Endothelial cell of umbilical vein (primary cell): ENCODE measurements at regions of chr20 and their contacts with region 1.

Region 1: GRCh38 chr20:2451939-2452732 is 18.5 kb downstream of the SNRPB start:
- DNase-seq: peak; percentile 62
- H3K4me3 ChIP-seq: no peak overlapping the region
- H3K27ac ChIP-seq: no peak overlapping the region
- H3K4me1 ChIP-seq: no peaks in the 10 kb centered on the region
- H3K27me3 ChIP-seq: no peaks in the 10 kb centered on the region
- CTCF ChIP-seq: peak; percentile 84 to 90
- POLR2A ChIP-seq: no peak

Region 2: DNA sequence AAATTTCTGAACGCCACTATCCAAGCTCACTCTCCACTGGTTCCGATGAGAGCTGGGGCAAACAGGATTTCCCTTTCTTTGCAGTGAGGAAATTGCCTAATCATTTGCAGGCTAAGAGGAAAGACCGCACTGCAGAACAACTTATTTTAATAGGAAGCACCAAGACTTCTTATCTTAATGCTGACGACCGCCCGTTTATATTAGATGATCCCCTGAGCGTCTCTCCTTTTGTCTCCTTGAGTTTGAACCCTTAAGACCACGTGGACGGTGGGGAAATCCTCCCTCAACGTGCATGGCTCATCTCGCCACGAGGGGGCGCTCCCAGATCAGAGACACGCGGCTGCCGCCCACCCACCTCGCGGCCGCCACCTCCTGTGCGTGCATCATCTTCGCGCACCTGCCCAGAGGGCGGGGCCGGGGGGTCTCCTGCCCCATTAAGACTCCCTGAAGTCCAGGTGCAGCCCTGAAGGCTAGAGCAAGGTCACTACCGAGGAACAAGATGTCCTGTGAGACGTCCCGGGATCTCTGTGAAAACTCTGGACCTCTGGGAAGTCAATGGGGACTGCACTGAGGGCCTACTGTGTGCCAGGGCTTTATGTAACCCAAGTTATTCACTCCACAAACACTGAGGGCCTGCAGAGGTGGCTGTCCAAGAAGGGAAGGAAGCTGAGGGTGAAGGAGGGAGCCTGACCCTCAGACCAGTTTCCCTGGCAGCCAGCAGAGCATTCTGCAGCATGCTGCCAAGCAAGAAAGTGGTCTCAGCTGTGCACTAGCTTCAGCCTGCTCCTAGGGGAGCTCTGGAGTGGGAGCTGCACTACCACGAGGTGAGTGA is 486.4 kb before region 1 on chr20:
- CTCF ChIA-PET with region 1: no interaction called
- POLR2A ChIA-PET with region 1: no interaction called
- dilution Hi-C with region 1: no loop called
- intact Hi-C with region 1: loop called (anchors 5 kb)
- DNase-seq: peak; percentile 63
- H3K4me3 ChIP-seq: peak overlapping the region in 1 of 3 experiments; percentile 30
- H3K27ac ChIP-seq: no peak overlapping the region
- H3K4me1 ChIP-seq: peaks cover 4% of the 10 kb centered on the region
- H3K27me3 ChIP-seq: peaks cover 15 to 18% of the 10 kb centered on the region in 2 experiments
- CTCF ChIP-seq: peak; percentile 92 to 94
- POLR2A ChIP-seq: no peak

Region 3: DNA sequence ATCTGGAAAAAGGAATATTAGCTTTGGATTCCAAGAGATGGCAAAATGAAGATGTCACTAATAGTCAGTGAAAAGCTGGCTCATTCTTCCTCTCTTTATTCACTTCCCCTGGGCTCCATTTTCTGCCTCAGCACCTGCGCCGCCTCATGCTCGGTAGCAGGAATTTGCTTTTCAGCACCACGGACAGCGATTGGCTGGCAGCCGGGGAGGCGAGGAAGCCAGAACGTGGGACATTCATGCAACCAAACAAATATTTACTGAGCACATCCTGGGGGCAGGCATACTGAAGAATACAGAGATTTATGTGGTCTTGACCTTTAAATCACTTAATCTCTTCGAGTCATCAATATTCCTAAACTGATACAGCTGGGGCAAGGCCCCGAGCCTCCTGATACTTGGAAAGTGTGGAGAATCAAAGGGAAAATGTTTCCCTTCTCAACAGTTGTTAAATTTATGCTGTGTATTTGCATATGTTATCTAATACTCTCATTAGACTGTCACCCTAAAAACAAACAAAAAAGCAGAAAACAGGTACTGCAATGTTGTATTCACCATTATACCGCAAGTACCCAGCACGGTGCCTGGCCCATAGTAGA is 446.2 kb before region 1 on chr20:
- CTCF ChIA-PET with region 1: no interaction called
- POLR2A ChIA-PET with region 1: no interaction called
- dilution Hi-C with region 1: no loop called
- intact Hi-C with region 1: loop called (anchors 2 kb)
- DNase-seq: peak; percentile 46
- H3K4me3 ChIP-seq: no peak overlapping the region
- H3K27ac ChIP-seq: no peak overlapping the region
- H3K4me1 ChIP-seq: no peaks in the 10 kb centered on the region
- H3K27me3 ChIP-seq: peaks cover 0 to 4% of the 10 kb centered on the region in 2 experiments
- CTCF ChIP-seq: peak in 1 of 2 donors; percentile 3
- POLR2A ChIP-seq: no peak

Region 4: GRCh38 chr20:2101865-2102584 is 350.1 kb before region 1 on chr20:
- CTCF ChIA-PET with region 1: no interaction called
- POLR2A ChIA-PET with region 1: no interaction called
- dilution Hi-C with region 1: no loop called
- intact Hi-C with region 1: loop called (anchors 10 kb)
- DNase-seq: peak; percentile 90
- H3K4me3 ChIP-seq: peak overlapping the region; percentile 49 to 77 (median 65)
- H3K27ac ChIP-seq: peak overlapping the region; percentile 98
- H3K4me1 ChIP-seq: peaks cover 16% of the 10 kb centered on the region
- H3K27me3 ChIP-seq: peaks cover 0 to 2% of the 10 kb centered on the region in 2 experiments
- CTCF ChIP-seq: no peak
- POLR2A ChIP-seq: peak; percentile 75

Region 5: DNA sequence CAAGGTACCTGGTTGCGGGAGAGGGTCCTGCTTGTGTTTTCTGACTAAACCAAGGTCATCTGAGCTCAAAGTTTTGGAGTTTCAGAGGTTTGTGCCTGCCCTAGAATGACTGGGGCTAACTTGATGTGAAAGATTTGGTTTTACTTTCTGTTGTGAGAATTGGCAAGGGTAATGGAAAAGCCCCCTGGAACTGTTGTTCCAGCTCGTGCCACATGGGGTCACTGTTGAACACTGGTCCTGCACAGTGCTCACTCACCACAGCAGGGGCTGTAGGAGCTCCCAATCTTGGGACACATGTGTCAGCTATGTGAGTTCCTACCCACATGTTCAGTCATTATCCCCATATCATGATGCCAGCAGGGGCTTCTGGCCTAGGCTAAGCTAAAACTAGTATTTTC is 65.0 kb before region 1 on chr20:
- CTCF ChIA-PET with region 1: interaction called, 16 read pairs
- POLR2A ChIA-PET with region 1: no interaction called
- dilution Hi-C with region 1: no loop called
- intact Hi-C with region 1: no loop called
- DNase-seq: peak; percentile 33
- H3K4me3 ChIP-seq: no peak overlapping the region
- H3K27ac ChIP-seq: no peak overlapping the region
- H3K4me1 ChIP-seq: no peaks in the 10 kb centered on the region
- H3K27me3 ChIP-seq: no peaks in the 10 kb centered on the region
- CTCF ChIP-seq: peak; percentile 45 to 59
- POLR2A ChIP-seq: no peak